Cardiac septum (tissue), 1 donor: ENCODE measurements at regions of chr5 and their contacts with region 1.

Region 1: GRCh38 chr5:2013301-2014057 is 130.8 kb upstream of the IRX4 start:
- DNase-seq: no peak

Region 2: DNA sequence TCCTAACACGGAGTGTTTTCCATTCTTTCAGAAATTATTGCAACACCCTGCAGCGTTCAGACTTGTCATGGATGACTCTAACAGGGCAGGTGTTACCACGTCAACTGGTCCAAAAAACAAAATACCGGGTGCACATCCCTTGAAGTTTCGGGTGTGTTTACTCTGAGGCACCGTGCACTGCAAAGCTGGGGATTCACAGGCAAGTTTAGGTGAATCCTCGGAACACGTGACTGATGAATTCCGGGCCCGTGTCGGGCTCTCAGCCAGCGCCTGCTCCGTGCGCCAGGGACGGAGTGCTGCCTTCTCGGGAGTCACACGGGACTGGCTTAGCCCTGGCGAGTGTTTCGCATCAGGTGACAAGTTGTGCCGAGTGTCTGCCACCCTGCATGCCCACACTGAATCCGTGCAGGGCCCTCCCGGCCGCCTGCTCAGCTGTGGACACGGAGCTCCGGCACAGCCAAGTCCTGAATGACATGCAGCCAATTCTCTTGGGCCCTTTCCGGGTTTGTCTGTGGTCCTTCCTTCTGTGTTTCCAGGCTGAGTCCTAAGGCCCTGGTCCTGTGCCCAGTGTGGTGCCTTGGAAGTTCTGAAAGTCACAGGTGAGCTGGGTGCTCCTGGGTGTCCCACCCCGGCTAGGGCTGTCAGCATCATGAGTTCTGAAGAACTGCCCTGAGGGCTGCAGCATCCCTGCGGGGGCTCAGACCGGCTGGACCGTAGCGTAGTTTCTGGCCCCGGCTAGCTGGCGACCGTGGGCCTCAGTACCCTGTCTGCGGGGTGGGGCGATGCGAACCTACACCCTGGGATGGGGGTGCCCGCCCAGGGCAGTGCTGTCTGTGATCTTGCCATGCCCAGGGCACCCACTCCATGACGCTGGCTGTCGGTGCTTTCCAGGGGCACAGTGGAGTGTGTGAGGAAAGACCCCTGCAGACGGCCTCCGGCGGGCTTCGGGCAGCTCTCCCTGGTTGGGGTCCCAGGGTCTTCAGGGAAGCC is 64.5 kb before region 1 on chr5:
- intact Hi-C with region 1: loop called (anchors 5 kb)
- DNase-seq: peak; percentile 87